ENCODE measurements at regions of chr2 and their contacts with region 1.

Region 1: DNA sequence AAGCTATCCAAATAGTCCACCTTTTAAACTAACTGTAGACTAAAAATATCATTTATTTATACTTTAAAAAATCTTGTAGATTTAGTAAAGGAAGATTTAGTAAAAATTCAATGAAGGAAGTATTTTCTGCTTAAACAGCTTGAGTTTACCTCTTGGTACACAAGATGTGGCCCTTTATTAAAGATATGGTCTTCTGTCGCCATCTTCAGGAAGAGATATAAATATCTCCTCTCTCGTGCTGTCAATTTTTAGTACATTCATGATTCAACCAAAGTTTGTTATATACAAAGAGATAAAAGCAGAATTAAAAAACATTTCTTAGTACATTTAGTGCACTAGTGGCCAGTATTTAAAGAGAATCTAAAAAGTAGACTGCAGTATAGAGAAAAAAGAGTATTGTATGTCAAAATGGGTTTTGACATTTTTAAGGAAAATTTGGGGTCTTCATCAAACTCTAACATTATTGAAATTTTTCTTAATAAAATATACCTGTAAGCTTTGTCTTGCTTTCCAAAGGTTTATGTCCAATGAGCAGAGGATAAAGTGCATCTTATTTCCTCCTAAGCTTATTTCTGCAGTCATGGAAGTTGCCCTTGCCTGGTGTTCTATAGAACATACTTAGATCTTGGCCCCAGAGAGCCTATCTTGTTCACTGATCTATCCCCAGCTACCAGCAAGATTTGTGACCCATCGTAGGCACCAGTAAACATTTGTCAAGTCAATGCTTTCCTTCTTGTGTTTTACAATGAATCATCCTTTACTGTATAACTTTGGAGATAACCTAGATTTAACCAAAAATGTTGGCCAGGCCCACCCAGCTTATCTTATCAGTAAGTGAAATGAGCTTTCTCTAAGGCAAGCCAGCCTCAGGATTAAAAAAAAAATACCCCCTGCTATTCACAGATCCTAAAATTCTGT is 18.5 kb upstream of the EML6 start:
- DNase-seq: no peak
- ATAC-seq: no peak
- H3K4me3 Mint-ChIP-seq: no peak overlapping the region
- H3K27ac Mint-ChIP-seq: no peak overlapping the region
- H3K4me1 Mint-ChIP-seq: peaks cover 10% of the 10 kb centered on the region
- H3K27me3 Mint-ChIP-seq: peaks cover 56% of the 10 kb centered on the region

Region 2: GRCh38 chr2:54522624-54523281 is 182.2 kb before region 1 on chr2:
- CTCF ChIA-PET with region 1: interaction called, 87 read pairs
- DNase-seq: peak; percentile 71
- ATAC-seq: peak; percentile 96
- H3K4me3 Mint-ChIP-seq: no peak overlapping the region
- H3K27ac Mint-ChIP-seq: no peak overlapping the region
- H3K4me1 Mint-ChIP-seq: peaks cover 22% of the 10 kb centered on the region
- H3K27me3 Mint-ChIP-seq: peaks cover 10% of the 10 kb centered on the region

Region 3: GRCh38 chr2:54657664-54658083 is 47.3 kb before region 1 on chr2:
- CTCF ChIA-PET with region 1: interaction called, 87 read pairs
- DNase-seq: peak; percentile 52
- ATAC-seq: no peak
- H3K4me3 Mint-ChIP-seq: no peak overlapping the region
- H3K27ac Mint-ChIP-seq: no peak overlapping the region
- H3K4me1 Mint-ChIP-seq: peaks cover 22% of the 10 kb centered on the region
- H3K27me3 Mint-ChIP-seq: no peaks in the 10 kb centered on the region

Region 4: DNA sequence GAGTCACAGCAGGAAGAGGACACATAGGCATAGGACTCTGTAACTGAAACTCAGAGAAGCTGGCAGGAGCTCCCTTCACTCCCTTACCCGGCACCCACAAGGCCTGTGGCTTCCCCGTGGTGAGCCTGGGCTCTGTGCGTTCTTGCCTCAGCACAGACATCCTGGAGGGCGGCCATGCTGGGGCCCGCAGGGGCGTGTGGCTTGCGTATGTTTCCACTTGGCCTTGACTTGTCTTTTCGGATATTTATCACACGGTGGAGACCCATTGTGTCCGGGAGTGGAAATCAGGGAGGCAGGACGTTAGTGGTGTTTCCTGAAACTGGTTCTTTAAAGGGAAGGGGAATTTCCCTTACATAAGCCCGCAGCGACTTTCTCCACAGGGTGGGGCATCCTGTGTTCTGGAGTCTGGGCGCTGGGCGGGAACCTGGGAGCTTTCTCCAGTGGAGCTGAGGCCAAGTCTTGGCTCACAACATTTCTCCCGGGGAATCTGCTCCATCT is 31.4 kb before region 1 on chr2:
- CTCF ChIA-PET with region 1: interaction called, 87 read pairs
- DNase-seq: peak; percentile 69
- ATAC-seq: peak; percentile 70
- H3K4me3 Mint-ChIP-seq: no peak overlapping the region
- H3K27ac Mint-ChIP-seq: no peak overlapping the region
- H3K4me1 Mint-ChIP-seq: peaks cover 30% of the 10 kb centered on the region
- H3K27me3 Mint-ChIP-seq: peaks cover 49% of the 10 kb centered on the region

Region 5: GRCh38 chr2:54691445-54692135 is 13.4 kb before region 1 on chr2:
- CTCF ChIA-PET with region 1: interaction called, 17 read pairs
- DNase-seq: no peak
- ATAC-seq: no peak
- H3K4me3 Mint-ChIP-seq: no peak overlapping the region
- H3K27ac Mint-ChIP-seq: no peak overlapping the region
- H3K4me1 Mint-ChIP-seq: peaks cover 21% of the 10 kb centered on the region
- H3K27me3 Mint-ChIP-seq: peaks cover 43% of the 10 kb centered on the region

Measured in activated CD8-positive, alpha-beta memory T cell treated with anti-CD3 and anti-CD28 coated beads, Interleukin-2, amount 10 ng/mL, durations not matched to agents 7 days and 5 days (primary cell).